ENCODE measurements at regions of chr15 and their contacts with region 1.

Region 1: DNA sequence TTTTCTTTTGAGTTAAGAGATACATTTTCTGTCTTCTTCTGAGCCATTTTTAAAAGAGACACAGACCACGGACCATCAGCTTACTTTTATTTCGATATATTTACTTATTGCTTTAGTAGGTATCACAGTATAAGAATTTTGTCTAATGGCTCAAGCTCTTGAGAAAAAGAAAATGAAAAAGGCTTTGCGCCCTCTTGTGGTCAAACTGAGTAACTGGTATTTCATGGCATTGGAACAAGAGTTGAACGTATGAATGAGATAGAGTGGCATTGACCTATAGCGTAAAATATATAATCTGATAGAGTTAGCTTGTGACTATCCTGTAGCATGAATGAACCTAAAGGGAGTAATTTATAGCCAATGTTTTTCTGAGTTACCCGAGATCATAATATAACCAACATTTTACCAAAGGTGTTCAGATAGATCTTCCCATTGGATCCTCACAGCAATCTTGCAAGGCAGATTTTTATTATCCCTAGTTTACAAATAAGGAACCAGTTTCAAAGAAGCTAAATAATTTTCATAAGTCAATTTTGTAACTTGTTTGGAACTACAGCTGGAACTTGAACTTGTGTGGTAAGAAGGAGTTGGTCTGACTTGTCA is 154.6 kb downstream of the POLR2M start:
- DNase-seq: peak; percentile 52
- H3K4me3 ChIP-seq: no peak overlapping the region
- H3K27ac ChIP-seq: no peak overlapping the region
- H3K4me1 ChIP-seq: no peaks in the 10 kb centered on the region
- CTCF ChIP-seq: peak; percentile 98

Region 2: GRCh38 chr15:57561041-57561711 is 300.0 kb before region 1 on chr15:
- CTCF ChIA-PET with region 1: no interaction called
- POLR2A ChIA-PET with region 1: no interaction called
- intact Hi-C with region 1: loop called (anchors 5 kb)
- DNase-seq: peak; percentile 72
- H3K4me3 ChIP-seq: no peak overlapping the region
- H3K27ac ChIP-seq: no peak overlapping the region
- H3K4me1 ChIP-seq: peaks cover 11% of the 10 kb centered on the region
- CTCF ChIP-seq: peak; percentile 93

Region 3: DNA sequence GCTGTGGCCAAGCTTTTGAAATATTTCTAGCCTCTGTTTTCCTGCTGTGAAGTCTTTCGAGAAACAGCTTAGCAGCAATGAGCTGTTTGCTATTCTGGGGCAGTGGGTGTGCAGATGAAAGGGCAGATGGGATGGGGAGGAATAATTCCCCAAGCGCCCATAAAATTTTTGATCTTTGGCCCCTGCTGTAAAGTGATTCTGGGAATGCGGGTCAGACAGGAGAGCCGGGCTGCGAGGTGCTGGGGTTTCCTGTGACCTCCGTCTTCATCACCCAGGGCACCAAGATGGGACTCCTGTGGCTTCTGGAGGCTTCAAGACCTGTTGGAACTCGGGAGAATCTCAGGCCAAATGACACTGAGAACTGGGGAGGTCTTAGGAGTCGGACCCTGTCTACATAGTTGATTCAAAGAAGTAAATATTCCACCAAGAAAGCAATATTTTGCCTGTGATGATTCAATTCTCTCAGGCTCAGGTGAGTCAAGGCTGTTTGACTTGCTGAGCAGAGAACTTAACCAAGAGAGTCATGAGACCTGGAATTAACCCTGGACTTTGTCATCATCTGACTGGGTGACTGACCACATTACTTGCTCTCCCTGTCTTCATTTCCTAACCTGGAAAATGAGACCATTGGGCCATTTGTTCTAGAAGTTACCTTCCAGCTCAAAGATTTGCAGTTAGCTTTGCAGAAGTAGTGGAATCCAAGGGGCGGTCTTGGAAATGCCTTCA is 68.2 kb before region 1 on chr15:
- CTCF ChIA-PET with region 1: no interaction called
- POLR2A ChIA-PET with region 1: no interaction called
- intact Hi-C with region 1: no loop called
- DNase-seq: no peak
- H3K4me3 ChIP-seq: no peak overlapping the region
- H3K27ac ChIP-seq: no peak overlapping the region
- H3K4me1 ChIP-seq: no peaks in the 10 kb centered on the region
- CTCF ChIP-seq: no peak

Region 4: DNA sequence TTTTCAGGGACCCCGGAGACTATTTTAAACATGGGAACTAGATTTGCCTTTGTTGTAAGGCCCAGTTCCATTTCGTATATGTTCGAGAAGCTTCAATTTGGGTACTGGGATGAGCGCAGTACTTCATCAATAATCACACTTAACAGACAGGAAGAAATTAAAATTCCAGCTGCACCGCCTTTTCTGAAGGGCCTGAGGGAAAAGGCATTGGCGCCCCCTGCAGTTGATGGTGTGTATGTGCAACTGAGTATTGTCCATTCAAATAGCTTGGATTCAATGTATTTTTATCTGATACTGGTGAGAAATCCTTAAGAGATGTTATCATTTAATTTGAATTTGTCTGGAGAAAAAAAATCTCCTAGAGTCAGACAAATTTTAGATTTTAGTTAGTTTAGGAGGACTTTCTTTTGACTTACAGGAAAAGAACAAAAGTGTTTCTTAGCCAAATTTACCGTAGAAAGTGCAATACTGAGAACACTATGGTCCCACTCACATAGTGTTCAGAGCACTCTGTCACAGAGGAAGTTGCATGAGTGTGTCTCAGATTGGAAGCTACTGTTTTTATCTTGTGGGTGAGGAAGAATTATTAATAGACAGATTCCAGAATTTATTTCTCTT is 209.8 kb after region 1 on chr15:
- CTCF ChIA-PET with region 1: no interaction called
- POLR2A ChIA-PET with region 1: no interaction called
- intact Hi-C with region 1: no loop called
- DNase-seq: peak; percentile 31
- H3K4me3 ChIP-seq: no peak overlapping the region
- H3K27ac ChIP-seq: no peak overlapping the region
- H3K4me1 ChIP-seq: no peaks in the 10 kb centered on the region
- CTCF ChIP-seq: peak; percentile 98

Measured in OCI-LY7 (cell line).